ENCODE measurements at regions of chr18 and their contacts with region 1.

Region 1: GRCh38 chr18:32018331-32019250 is at the start of gene RNF125:
- DNase-seq: peak; percentile 94
- H3K4me3 Mint-ChIP-seq: peak within 1 kb of the TSS; percentile 90
- H3K27ac Mint-ChIP-seq: peak within 1 kb of the TSS; percentile 99
- H3K4me1 Mint-ChIP-seq: peaks cover 53% of the 10 kb centered on the region
- H3K27me3 Mint-ChIP-seq: no peaks in the 10 kb centered on the region
- total RNA-seq, gene RNF125: 43.8 to 48.4 TPM

Region 2: GRCh38 chr18:31720867-31721266 is 297.7 kb before region 1 on chr18:
- CTCF ChIA-PET with region 1: no interaction called
- POLR2A ChIA-PET with region 1: no interaction called
- DNase-seq: no peak
- H3K4me3 Mint-ChIP-seq: no peak overlapping the region
- H3K27ac Mint-ChIP-seq: no peak overlapping the region
- H3K4me1 Mint-ChIP-seq: no peaks in the 10 kb centered on the region
- H3K27me3 Mint-ChIP-seq: peaks cover 28% of the 10 kb centered on the region

Region 3: GRCh38 chr18:31741097-31741735 is 277.4 kb before region 1 on chr18:
- CTCF ChIA-PET with region 1: no interaction called
- POLR2A ChIA-PET with region 1: no interaction called
- DNase-seq: peak; percentile 59
- H3K4me3 Mint-ChIP-seq: no peak overlapping the region
- H3K27ac Mint-ChIP-seq: no peak overlapping the region
- H3K4me1 Mint-ChIP-seq: no peaks in the 10 kb centered on the region
- H3K27me3 Mint-ChIP-seq: no peaks in the 10 kb centered on the region

Region 4: GRCh38 chr18:31977270-31977872 is 41.2 kb before region 1 on chr18:
- CTCF ChIA-PET with region 1: interaction called, 13 read pairs
- POLR2A ChIA-PET with region 1: interaction called, 3 read pairs
- DNase-seq: peak; percentile 25
- H3K4me3 Mint-ChIP-seq: no peak overlapping the region
- H3K27ac Mint-ChIP-seq: no peak overlapping the region
- H3K4me1 Mint-ChIP-seq: no peaks in the 10 kb centered on the region
- H3K27me3 Mint-ChIP-seq: no peaks in the 10 kb centered on the region

Region 5: DNA sequence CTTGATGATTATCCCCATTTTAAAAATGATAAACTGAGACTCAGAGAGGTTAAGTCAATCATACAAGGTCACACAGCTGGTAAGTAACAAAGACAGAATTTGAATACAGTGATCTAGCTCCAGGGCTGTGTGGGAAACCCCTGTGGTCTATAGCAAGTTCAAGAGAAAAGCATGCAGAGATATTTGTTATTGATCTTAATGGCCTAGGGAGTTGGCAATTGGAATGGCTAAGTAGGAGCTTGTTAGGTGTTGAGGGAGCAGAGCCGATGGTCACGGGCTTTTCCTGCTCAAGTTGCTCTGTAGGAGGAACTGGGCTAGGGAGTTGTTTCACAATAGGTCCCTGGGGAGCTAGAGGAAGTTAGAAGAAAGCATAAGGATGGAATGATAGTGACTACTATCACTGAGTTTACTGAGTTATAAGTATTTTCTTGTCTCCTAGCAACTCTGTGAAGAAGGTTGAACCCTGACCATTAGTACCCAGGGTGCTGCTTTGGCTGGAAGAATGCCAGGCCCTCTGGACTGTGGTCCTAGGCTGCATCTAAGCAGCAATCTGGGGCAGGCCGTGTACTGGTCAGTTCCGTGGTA is 30.0 kb after region 1 on chr18:
- CTCF ChIA-PET with region 1: interaction called, 64 read pairs
- POLR2A ChIA-PET with region 1: interaction called, 182 read pairs
- DNase-seq: no peak
- H3K4me3 Mint-ChIP-seq: no peak overlapping the region
- H3K27ac Mint-ChIP-seq: peak overlapping the region; percentile 91
- H3K4me1 Mint-ChIP-seq: peaks cover 53% of the 10 kb centered on the region
- H3K27me3 Mint-ChIP-seq: no peaks in the 10 kb centered on the region

Region 6: GRCh38 chr18:32086861-32087260 is 68.3 kb after region 1 on chr18:
- CTCF ChIA-PET with region 1: interaction called, 30 read pairs
- POLR2A ChIA-PET with region 1: interaction called, 166 read pairs
- DNase-seq: no peak
- H3K4me3 Mint-ChIP-seq: no peak overlapping the region
- H3K27ac Mint-ChIP-seq: peak overlapping the region; percentile 5
- H3K4me1 Mint-ChIP-seq: peaks cover 43% of the 10 kb centered on the region
- H3K27me3 Mint-ChIP-seq: peaks cover 2% of the 10 kb centered on the region